Endothelial cell of umbilical vein (primary cell): ENCODE measurements at regions of chr15 and their contacts with region 1.

Region 1: DNA sequence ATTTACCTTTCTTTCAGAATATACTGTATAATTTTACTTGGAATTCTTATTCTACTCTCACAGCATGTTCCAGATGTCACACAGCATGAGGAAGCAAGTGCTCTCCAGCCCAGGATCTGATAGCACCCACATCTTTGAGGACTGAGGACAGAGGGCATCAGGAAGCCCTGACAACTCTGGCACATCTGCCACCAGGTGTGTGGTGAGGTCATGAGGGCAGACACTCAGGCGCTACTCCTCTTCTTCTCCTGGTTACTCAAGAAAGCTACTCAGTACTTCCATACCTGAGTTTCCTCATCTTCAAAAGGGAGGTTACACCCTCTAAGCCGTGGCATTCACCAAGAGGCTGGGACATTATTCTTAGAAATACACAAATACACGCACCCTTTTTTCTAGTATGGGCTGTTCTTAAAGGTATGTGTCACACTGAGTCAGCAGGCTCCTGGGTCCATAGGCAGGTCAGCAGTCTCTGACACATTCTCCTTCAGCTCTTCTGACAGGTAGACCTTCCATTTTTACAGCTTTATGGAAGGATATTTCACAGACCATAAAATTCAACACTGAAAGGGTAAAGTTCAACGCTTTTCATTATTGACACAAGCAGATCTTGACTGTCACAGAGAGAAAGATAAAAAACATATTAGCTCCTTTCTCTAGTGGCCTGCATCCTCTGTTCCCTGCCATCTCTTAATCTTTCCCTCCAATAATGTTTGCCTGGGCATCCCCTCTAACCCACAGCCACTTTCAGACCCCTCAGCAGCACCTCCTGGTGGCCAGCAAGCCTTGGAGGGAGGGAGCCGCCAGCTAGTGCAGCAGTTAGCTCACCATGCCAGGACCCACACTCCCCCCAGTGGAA is 103.2 kb upstream of the TJP1 start:
- DNase-seq: peak; percentile 72
- H3K4me3 ChIP-seq: no peak overlapping the region
- H3K27ac ChIP-seq: no peak overlapping the region
- H3K4me1 ChIP-seq: peaks cover 12% of the 10 kb centered on the region
- H3K27me3 ChIP-seq: no peaks in the 10 kb centered on the region
- CTCF ChIP-seq: peak; percentile 88 to 90
- POLR2A ChIP-seq: no peak

Region 2: GRCh38 chr15:29090617-29091466 is 834.6 kb before region 1 on chr15:
- CTCF ChIA-PET with region 1: no interaction called
- POLR2A ChIA-PET with region 1: no interaction called
- dilution Hi-C with region 1: no loop called
- intact Hi-C with region 1: no loop called
- DNase-seq: no peak
- H3K4me3 ChIP-seq: no peak overlapping the region
- H3K27ac ChIP-seq: no peak overlapping the region
- H3K4me1 ChIP-seq: no peaks in the 10 kb centered on the region
- H3K27me3 ChIP-seq: no peaks in the 10 kb centered on the region
- CTCF ChIP-seq: peak; percentile 79 to 83
- POLR2A ChIP-seq: no peak

Region 3: DNA sequence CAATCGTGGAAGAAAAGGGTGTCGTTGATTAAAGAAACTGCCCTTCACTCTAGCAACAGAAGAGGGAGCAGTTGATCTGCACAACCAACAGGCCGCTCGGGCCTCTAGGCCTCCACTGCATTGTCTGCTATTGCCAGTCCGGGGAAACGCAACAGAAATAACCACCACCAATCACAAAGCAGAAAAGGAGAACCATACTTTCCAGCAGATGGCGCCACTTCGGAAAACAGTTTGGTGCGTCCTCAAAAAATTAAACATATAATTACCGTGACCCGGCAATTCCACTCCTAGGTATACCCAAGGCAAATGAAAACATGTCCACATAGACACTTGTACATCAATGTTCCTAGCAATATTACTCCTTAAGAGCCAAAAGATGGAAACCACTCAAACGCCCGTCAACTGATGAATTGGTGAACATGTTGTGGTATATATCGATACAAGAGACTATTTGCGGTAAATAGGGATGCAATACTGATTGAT is 257.3 kb before region 1 on chr15:
- CTCF ChIA-PET with region 1: interaction called, 10 read pairs
- POLR2A ChIA-PET with region 1: no interaction called
- dilution Hi-C with region 1: no loop called
- intact Hi-C with region 1: loop called (anchors 5 kb)
- DNase-seq: peak; percentile 91
- H3K4me3 ChIP-seq: no peak overlapping the region
- H3K27ac ChIP-seq: no peak overlapping the region
- H3K4me1 ChIP-seq: no peaks in the 10 kb centered on the region
- H3K27me3 ChIP-seq: no peaks in the 10 kb centered on the region
- CTCF ChIP-seq: peak; percentile 85 to 97
- POLR2A ChIP-seq: no peak

Region 4: GRCh38 chr15:29698030-29698701 is 227.3 kb before region 1 on chr15:
- CTCF ChIA-PET with region 1: interaction called, 3 read pairs
- POLR2A ChIA-PET with region 1: no interaction called
- dilution Hi-C with region 1: no loop called
- intact Hi-C with region 1: loop called (anchors 1 kb)
- DNase-seq: peak; percentile 90
- H3K4me3 ChIP-seq: no peak overlapping the region
- H3K27ac ChIP-seq: peak overlapping the region; percentile 90
- H3K4me1 ChIP-seq: peaks cover 20% of the 10 kb centered on the region
- H3K27me3 ChIP-seq: no peaks in the 10 kb centered on the region
- CTCF ChIP-seq: no peak
- POLR2A ChIP-seq: no peak

Region 5: DNA sequence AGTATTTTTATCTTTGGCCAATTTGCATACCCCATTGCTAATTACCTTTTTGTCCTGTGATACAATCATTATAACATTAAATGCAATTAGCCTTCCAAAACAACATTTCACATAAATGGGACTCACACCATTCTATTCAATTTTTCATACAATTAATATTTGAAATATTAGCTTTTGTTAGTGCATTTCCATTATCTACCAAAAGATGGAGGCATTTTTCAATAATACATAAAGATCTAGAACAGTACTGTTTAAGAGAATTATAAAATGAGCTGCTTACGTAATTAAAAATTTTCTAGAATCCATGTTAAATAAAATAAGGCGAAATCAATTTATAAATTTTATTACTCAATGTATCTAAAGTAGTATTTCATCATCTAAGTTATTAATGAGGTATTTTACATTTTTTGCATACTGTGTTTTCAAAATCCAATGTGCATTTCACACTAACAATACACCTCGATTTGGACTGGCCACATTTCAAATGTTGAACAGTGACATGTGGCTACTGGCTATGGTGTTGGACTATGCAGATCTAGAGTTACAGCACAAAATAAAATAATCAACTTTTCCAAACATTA is 177.5 kb before region 1 on chr15:
- CTCF ChIA-PET with region 1: interaction called, 295 read pairs
- POLR2A ChIA-PET with region 1: interaction called, 5 read pairs
- dilution Hi-C with region 1: no loop called
- intact Hi-C with region 1: loop called (anchors 1 kb)
- DNase-seq: peak; percentile 49
- H3K4me3 ChIP-seq: no peak overlapping the region
- H3K27ac ChIP-seq: no peak overlapping the region
- H3K4me1 ChIP-seq: no peaks in the 10 kb centered on the region
- H3K27me3 ChIP-seq: no peaks in the 10 kb centered on the region
- CTCF ChIP-seq: peak; percentile 7 to 21
- POLR2A ChIP-seq: no peak

Region 6: DNA sequence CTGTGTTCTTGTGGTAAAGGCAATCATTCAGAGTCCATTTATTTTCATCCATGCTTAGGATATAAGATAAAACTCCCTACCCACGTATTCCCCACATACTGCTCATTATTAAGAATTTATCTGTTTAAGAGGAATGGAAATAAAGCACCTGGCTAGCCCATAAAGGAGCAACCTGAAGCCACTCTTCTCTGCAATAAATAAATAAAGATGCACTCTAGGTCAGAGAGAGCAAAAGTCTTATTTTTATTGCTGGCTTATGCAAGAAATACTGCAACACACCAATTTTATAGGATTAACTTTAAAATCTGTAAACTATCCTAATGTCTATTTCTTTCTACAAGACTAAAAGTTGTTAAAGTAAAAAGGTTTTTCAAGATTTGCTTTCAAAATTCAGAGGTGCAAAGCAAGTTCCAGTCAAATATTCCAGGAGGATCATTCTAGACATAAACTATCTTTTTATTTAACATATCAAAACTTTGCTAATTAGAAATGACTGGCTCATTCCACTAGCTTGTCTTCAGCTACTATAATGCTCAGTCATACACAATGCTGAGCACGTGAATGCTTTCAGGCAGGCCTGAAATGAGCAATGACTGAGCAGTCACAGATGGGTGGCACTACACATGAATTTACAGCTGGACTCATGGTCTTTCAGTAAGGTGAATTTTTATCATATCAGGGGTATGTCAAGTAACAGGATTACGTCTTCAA is 110.3 kb before region 1 on chr15:
- CTCF ChIA-PET with region 1: interaction called, 40 read pairs
- POLR2A ChIA-PET with region 1: no interaction called
- dilution Hi-C with region 1: no loop called
- intact Hi-C with region 1: no loop called
- DNase-seq: peak; percentile 62
- H3K4me3 ChIP-seq: no peak overlapping the region
- H3K27ac ChIP-seq: no peak overlapping the region
- H3K4me1 ChIP-seq: peaks cover 40% of the 10 kb centered on the region
- H3K27me3 ChIP-seq: no peaks in the 10 kb centered on the region
- CTCF ChIP-seq: no peak
- POLR2A ChIP-seq: no peak

Region 7: GRCh38 chr15:29835301-29835700 is 90.2 kb before region 1 on chr15:
- CTCF ChIA-PET with region 1: interaction called, 12 read pairs
- POLR2A ChIA-PET with region 1: no interaction called
- dilution Hi-C with region 1: no loop called
- intact Hi-C with region 1: no loop called
- DNase-seq: peak; percentile 46
- H3K4me3 ChIP-seq: no peak overlapping the region
- H3K27ac ChIP-seq: no peak overlapping the region
- H3K4me1 ChIP-seq: peaks cover 5% of the 10 kb centered on the region
- H3K27me3 ChIP-seq: no peaks in the 10 kb centered on the region
- CTCF ChIP-seq: no peak
- POLR2A ChIP-seq: no peak

Region 8: GRCh38 chr15:29942143-29942542 is 16.7 kb after region 1 on chr15:
- CTCF ChIA-PET with region 1: interaction called, 17 read pairs
- POLR2A ChIA-PET with region 1: no interaction called
- dilution Hi-C with region 1: no loop called
- intact Hi-C with region 1: no loop called
- DNase-seq: no peak
- H3K4me3 ChIP-seq: no peak overlapping the region
- H3K27ac ChIP-seq: no peak overlapping the region
- H3K4me1 ChIP-seq: peaks cover 10% of the 10 kb centered on the region
- H3K27me3 ChIP-seq: no peaks in the 10 kb centered on the region
- CTCF ChIP-seq: peak in 1 of 2 donors; percentile 18
- POLR2A ChIP-seq: no peak

Region 9: GRCh38 chr15:29962407-29962806 is 37.0 kb after region 1 on chr15:
- CTCF ChIA-PET with region 1: no interaction called
- POLR2A ChIA-PET with region 1: no interaction called
- dilution Hi-C with region 1: no loop called
- intact Hi-C with region 1: no loop called
- DNase-seq: no peak
- H3K4me3 ChIP-seq: no peak overlapping the region
- H3K27ac ChIP-seq: no peak overlapping the region
- H3K4me1 ChIP-seq: no peaks in the 10 kb centered on the region
- H3K27me3 ChIP-seq: peaks cover 8 to 10% of the 10 kb centered on the region in 2 experiments
- CTCF ChIP-seq: no peak
- POLR2A ChIP-seq: no peak

Region 10: GRCh38 chr15:29988689-29989088 is 63.2 kb after region 1 on chr15:
- CTCF ChIA-PET with region 1: no interaction called
- POLR2A ChIA-PET with region 1: no interaction called
- dilution Hi-C with region 1: no loop called
- intact Hi-C with region 1: no loop called
- DNase-seq: peak; percentile 14
- H3K4me3 ChIP-seq: no peak overlapping the region
- H3K27ac ChIP-seq: no peak overlapping the region
- H3K4me1 ChIP-seq: no peaks in the 10 kb centered on the region
- H3K27me3 ChIP-seq: peaks cover under 1 to 4% of the 10 kb centered on the region in 2 experiments
- CTCF ChIP-seq: no peak
- POLR2A ChIP-seq: no peak